ENCODE measurements at regions of chr12 and their contacts with region 1.

Region 1: DNA sequence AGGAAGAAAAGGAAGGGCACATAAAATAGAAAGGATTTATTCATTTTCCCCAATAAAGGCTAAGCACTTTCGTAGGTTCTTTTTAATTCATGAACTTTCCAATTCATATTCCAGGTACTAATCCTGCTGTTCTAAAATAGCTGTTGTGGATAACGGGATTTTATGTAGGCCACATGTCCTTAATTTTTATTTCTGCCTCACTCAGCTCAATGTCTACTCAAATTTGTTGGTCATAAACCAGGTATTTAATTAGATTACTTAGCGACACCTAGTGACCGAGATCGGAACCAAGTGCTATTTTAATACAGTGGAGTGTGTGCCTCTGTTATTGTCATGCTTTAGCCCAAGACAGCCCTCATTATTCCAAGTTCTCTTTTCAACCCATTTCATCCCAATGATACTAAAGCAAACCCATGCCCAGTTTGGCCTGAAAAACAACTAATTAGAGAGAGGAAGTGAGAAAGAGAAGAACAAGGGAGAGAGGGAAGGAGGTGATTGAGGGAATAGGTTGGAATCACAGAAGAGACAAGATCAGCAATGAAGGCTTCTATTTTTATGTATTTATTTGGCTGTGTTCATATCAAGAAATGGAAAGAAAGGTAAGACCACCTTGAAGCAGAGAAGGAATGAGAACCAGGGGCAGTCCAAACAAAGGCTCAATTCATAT is 45.9 kb upstream of the IFNG-AS1 start:
- DNase-seq: peak; percentile 64
- H3K4me3 ChIP-seq: no peak overlapping the region
- H3K27ac ChIP-seq: no peak overlapping the region
- H3K4me1 ChIP-seq: no peaks in the 10 kb centered on the region
- H3K27me3 ChIP-seq: peaks cover 0 to 4% of the 10 kb centered on the region in 2 experiments
- CTCF ChIP-seq: peak; percentile 44 to 50
- POLR2A ChIP-seq: no peak

Region 2: DNA sequence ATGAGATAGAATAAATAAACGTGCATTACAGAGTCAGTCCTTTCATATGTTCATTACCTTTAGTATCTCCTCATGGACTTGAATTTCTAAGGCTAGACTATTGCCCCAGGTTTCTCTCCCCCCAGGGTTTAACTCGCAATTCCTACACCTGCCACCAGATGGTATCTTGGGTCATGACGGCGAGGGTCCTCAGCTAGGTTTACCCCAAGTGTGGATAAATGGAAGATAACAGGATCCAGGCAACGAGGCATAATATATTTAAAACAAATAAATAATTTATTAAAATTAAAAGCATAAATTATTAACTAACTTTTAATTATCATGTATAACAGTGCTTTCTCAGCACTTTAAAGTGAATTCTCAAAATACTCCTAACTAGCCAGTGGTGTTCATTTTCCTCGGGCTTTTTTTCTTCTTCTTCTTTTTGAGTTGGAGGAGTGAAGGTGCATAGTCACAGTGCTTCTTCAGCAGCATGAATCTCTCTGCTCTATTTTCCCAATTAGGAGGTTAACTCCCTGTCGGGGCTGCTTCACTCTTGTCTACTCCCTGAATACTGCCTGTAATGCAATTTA is 917.7 kb before region 1 on chr12:
- CTCF ChIA-PET with region 1: interaction called, 12 read pairs
- POLR2A ChIA-PET with region 1: no interaction called
- dilution Hi-C with region 1: no loop called
- intact Hi-C with region 1: loop called (anchors 5 kb)
- DNase-seq: peak; percentile 44
- H3K4me3 ChIP-seq: no peak overlapping the region
- H3K27ac ChIP-seq: no peak overlapping the region
- H3K4me1 ChIP-seq: no peaks in the 10 kb centered on the region
- H3K27me3 ChIP-seq: no peaks in the 10 kb centered on the region
- CTCF ChIP-seq: peak; percentile 54 to 60
- POLR2A ChIP-seq: no peak

Region 3: GRCh38 chr12:67364228-67364627 is 579.1 kb before region 1 on chr12:
- CTCF ChIA-PET with region 1: interaction called, 573 read pairs
- POLR2A ChIA-PET with region 1: no interaction called
- dilution Hi-C with region 1: no loop called
- intact Hi-C with region 1: no loop called
- DNase-seq: no peak
- H3K4me3 ChIP-seq: no peak overlapping the region
- H3K27ac ChIP-seq: no peak overlapping the region
- H3K4me1 ChIP-seq: no peaks in the 10 kb centered on the region
- H3K27me3 ChIP-seq: no peaks in the 10 kb centered on the region
- CTCF ChIP-seq: no peak
- POLR2A ChIP-seq: no peak

Region 4: GRCh38 chr12:67430708-67431335 is 512.5 kb before region 1 on chr12:
- CTCF ChIA-PET with region 1: interaction called, 10 read pairs
- POLR2A ChIA-PET with region 1: no interaction called
- dilution Hi-C with region 1: no loop called
- intact Hi-C with region 1: no loop called
- DNase-seq: no peak
- H3K4me3 ChIP-seq: no peak overlapping the region
- H3K27ac ChIP-seq: no peak overlapping the region
- H3K4me1 ChIP-seq: no peaks in the 10 kb centered on the region
- H3K27me3 ChIP-seq: no peaks in the 10 kb centered on the region
- CTCF ChIP-seq: no peak
- POLR2A ChIP-seq: no peak

Region 5: GRCh38 chr12:67648521-67649260 is 294.7 kb before region 1 on chr12 and contains the start of gene DYRK2:
- CTCF ChIA-PET with region 1: interaction called, 12 read pairs
- POLR2A ChIA-PET with region 1: no interaction called
- dilution Hi-C with region 1: no loop called
- intact Hi-C with region 1: loop called (anchors 5 kb)
- DNase-seq: peak; percentile 76
- H3K4me3 ChIP-seq: peak within 1 kb of the TSS; percentile 58 to 90 (median 82)
- H3K27ac ChIP-seq: peak within 1 kb of the TSS; percentile 58
- H3K4me1 ChIP-seq: peaks cover 11% of the 10 kb centered on the region
- H3K27me3 ChIP-seq: no peaks in the 10 kb centered on the region
- CTCF ChIP-seq: no peak
- POLR2A ChIP-seq: peak; percentile 77
- total RNA-seq, gene DYRK2: 11.0 and 13.7 TPM in 2 replicates

Region 6: GRCh38 chr12:67853204-67853603 is 90.2 kb before region 1 on chr12:
- CTCF ChIA-PET with region 1: no interaction called
- POLR2A ChIA-PET with region 1: no interaction called
- dilution Hi-C with region 1: no loop called
- intact Hi-C with region 1: no loop called
- DNase-seq: no peak
- H3K4me3 ChIP-seq: no peak overlapping the region
- H3K27ac ChIP-seq: no peak overlapping the region
- H3K4me1 ChIP-seq: no peaks in the 10 kb centered on the region
- H3K27me3 ChIP-seq: no peaks in the 10 kb centered on the region
- CTCF ChIP-seq: no peak
- POLR2A ChIP-seq: no peak